Cardiac septum (tissue), 1 donor: ENCODE measurements at regions of chr6 and their contacts with region 1.

Region 1: GRCh38 chr6:169959136-169960002 is 207.9 kb downstream of the ERMARD start:
- DNase-seq: no peak

Region 2: GRCh38 chr6:170516783-170517616 is 557.6 kb after region 1 on chr6:
- intact Hi-C with region 1: loop called (anchors 10 kb)
- DNase-seq: no peak